Lower lobe of right lung (tissue), 2 donors: ENCODE measurements at regions of chr20 and their contacts with region 1.

Region 1: GRCh38 chr20:12966468-12967341 is 42.1 kb upstream of the SPTLC3 start:
- DNase-seq: no peak
- ATAC-seq: no peak
- H3K4me3 ChIP-seq: no peak overlapping the region
- H3K27ac ChIP-seq: no peak overlapping the region
- H3K4me1 ChIP-seq: no peaks in the 10 kb centered on the region
- H3K27me3 ChIP-seq: no peaks in the 10 kb centered on the region
- CTCF ChIP-seq: no peak

Region 2: DNA sequence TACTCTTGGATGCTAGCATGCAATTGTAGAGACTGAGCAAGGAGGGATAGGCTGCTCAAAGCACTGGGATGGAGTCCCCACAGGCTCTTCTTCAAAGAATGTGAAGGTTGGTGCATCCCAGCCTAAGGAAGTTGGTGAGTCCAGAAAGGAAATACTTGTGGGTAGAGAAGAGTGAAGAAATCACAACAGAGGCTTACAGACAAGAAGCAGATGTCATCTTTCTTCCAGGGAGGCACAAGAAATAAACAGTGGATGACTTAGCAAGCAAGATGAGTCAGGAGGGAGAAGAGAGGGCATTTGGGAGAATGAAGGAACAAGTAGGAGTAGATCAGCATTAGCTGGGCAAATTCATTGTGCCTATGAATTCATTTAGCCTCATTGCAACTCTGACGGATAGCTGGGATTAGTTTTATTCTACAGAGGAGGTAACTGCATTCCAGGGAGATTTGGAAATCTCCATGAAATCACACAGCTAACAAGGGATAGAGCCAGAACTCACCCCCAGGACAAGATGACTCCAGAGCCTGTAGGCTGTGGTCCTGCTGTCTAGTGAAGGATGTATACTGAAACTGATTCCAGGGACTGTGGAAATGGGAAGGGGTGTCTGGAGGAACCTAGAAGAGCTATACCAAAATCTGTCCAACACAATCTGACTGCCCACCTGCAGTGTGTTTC is 83.7 kb before region 1 on chr20:
- intact Hi-C with region 1: no loop called
- DNase-seq: no peak
- ATAC-seq: no peak
- H3K4me3 ChIP-seq: no peak overlapping the region
- H3K27ac ChIP-seq: no peak overlapping the region
- H3K4me1 ChIP-seq: no peaks in the 10 kb centered on the region
- H3K27me3 ChIP-seq: no peaks in the 10 kb centered on the region
- CTCF ChIP-seq: no peak

Region 3: GRCh38 chr20:13009682-13010406 is 43.1 kb after region 1 on chr20:
- intact Hi-C with region 1: no loop called
- DNase-seq: no peak
- ATAC-seq: peak; percentile 91 to 95
- H3K4me3 ChIP-seq: peak overlapping the region; percentile 58
- H3K27ac ChIP-seq: peak overlapping the region; percentile 70
- H3K4me1 ChIP-seq: peaks cover 20% of the 10 kb centered on the region
- H3K27me3 ChIP-seq: no peaks in the 10 kb centered on the region
- CTCF ChIP-seq: no peak

Region 4: GRCh38 chr20:13105864-13106457 is 139.3 kb after region 1 on chr20:
- intact Hi-C with region 1: loop called (anchors 10 kb)
- DNase-seq: no peak
- ATAC-seq: no peak
- H3K4me3 ChIP-seq: no peak overlapping the region
- H3K27ac ChIP-seq: no peak overlapping the region
- H3K4me1 ChIP-seq: no peaks in the 10 kb centered on the region
- H3K27me3 ChIP-seq: no peaks in the 10 kb centered on the region
- CTCF ChIP-seq: peak; percentile 73

Region 5: GRCh38 chr20:13510837-13511488 is 544.3 kb after region 1 on chr20:
- intact Hi-C with region 1: no loop called
- DNase-seq: no peak
- ATAC-seq: peak; percentile 38 to 47
- H3K4me3 ChIP-seq: no peak overlapping the region
- H3K27ac ChIP-seq: no peak overlapping the region
- H3K4me1 ChIP-seq: no peaks in the 10 kb centered on the region
- H3K27me3 ChIP-seq: no peaks in the 10 kb centered on the region
- CTCF ChIP-seq: no peak